ENCODE measurements at regions of chr10 and their contacts with region 1.

Region 1: GRCh38 chr10:7432884-7433726 is 22.3 kb upstream of the SFMBT2 start:
- DNase-seq: no peak
- H3K4me3 ChIP-seq: no peak overlapping the region
- H3K27ac ChIP-seq: no peak overlapping the region
- H3K4me1 ChIP-seq: no peaks in the 10 kb centered on the region
- H3K27me3 ChIP-seq: peaks cover 29% of the 10 kb centered on the region
- CTCF ChIP-seq: no peak

Region 2: DNA sequence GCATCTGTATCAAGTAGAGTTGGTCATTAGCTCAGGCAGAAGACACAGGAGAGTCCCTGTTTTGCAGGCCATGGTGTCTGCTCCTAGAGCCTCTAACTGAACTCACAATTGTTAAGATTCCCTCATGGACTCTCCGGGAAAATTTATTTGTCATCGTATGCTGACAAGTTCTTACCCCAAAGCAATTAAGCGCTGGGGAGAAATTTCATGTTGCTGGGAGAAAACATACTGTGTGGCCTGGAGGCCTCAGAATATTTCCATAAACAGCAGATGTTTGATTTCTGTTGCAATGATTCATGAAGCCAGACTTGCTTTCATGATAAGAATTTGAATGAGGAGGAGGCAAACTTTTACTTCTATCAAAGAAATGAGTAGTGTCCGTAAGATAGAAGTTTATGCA is 1204.5 kb after region 1 on chr10:
- CTCF ChIA-PET with region 1: interaction called, 10 read pairs
- POLR2A ChIA-PET with region 1: no interaction called
- intact Hi-C with region 1: no loop called
- DNase-seq: no peak
- H3K4me3 ChIP-seq: no peak overlapping the region
- H3K27ac ChIP-seq: no peak overlapping the region
- H3K4me1 ChIP-seq: peaks cover 18% of the 10 kb centered on the region
- H3K27me3 ChIP-seq: no peaks in the 10 kb centered on the region
- CTCF ChIP-seq: no peak